ENCODE measurements at regions of chr18 and their contacts with region 1.

Region 1: GRCh38 chr18:50356036-50356945 is 18.6 kb upstream of the SKA1 start:
- DNase-seq: no peak
- H3K4me3 ChIP-seq: no peak overlapping the region
- H3K27ac ChIP-seq: no peak overlapping the region
- H3K4me1 ChIP-seq: peaks cover 0 to 4% (median 0%) of the 10 kb centered on the region in 4 experiments; a peak in 1 of 7 replicates
- H3K27me3 ChIP-seq: 0 out of 7 replicates have a peak, but pooled peaks cover 0 to 2% (median 0%) of the 10 kb centered on the region in 4 experiments
- CTCF ChIP-seq: peak in 2 of 3 experiments; percentile 33 to 39; a peak in 2 of 4 replicates
- EP300 ChIP-seq: no peak
- POLR2A ChIP-seq: no peak
- RAD21 ChIP-seq: peak in 1 of 2 experiments; percentile 10; a peak in 1 of 4 replicates

Region 2: DNA sequence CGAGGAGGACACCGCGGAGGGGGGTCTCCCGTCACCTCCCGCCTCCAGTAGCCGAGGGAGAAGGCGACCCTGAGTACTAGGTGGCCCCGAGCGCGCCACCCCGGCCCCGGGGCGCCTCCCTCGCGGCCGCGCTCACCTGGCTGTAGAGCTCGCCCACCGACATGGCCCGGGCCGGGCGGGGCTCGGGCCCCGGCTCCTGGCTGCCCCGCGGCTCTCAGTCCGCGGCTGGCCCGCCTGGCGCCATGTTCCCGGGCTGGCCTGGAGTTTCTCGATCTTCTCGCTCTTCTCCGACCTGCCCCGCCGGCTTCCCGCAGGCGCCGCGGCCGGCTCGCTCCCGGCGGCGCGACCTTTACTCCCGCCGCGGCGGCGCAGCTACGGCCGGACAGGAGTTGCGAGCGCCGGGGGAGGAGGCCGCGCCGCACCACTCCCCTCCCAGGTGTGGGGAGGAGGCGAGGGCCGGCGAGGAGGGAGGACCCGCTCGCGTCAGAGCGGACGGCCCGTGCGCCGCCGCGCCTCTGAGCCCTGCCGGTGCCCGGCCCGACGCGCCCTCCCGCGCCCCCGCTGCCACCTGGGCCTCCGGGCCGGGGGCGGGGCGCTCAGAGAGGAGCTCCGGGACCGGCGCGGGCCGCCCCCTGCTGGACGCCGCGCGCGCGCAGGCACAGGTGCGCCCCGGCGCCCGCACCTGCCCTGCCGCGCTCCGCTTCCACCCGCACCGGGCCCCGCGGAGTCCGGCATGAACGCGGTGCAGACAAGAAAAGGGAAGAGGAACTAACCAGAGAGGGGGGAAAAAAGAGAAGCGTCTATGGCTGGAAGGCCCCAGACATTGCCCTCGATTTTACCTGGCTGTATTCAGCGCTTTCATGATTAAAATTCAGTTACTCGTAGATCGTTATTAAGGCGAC is 161.4 kb before region 1 on chr18 and contains the start of gene MYO5B:
- CTCF ChIA-PET with region 1: interaction called, 11 read pairs
- POLR2A ChIA-PET with region 1: no interaction called
- DNase-seq: peak in 1 of 2 experiments; percentile 86
- H3K4me3 ChIP-seq: peak within 1 kb of the TSS; percentile 52 to 87 (median 54)
- H3K27ac ChIP-seq: no peak within 1 kb of the TSS
- H3K4me1 ChIP-seq: peaks cover 0 to 12% (median 9%) of the 10 kb centered on the region in 4 experiments; a peak in 5 of 7 replicates
- H3K27me3 ChIP-seq: peaks cover 23 to 51% (median 42%) of the 10 kb centered on the region in 4 experiments
- CTCF ChIP-seq: peak; percentile 65 to 80 (median 78)
- EP300 ChIP-seq: peak in 1 of 2 experiments; percentile 50; a peak in 1 of 3 replicates
- POLR2A ChIP-seq: peak in 1 of 2 experiments; percentile 24; a peak in 1 of 3 replicates
- RAD21 ChIP-seq: peak; percentile 34 to 75; a peak in 3 of 4 replicates
- total RNA-seq, gene MYO5B: 6.4 and 6.9 TPM in 2 replicates

Region 3: GRCh38 chr18:50218432-50219197 is 137.7 kb before region 1 on chr18:
- CTCF ChIA-PET with region 1: interaction called, 51 read pairs
- POLR2A ChIA-PET with region 1: no interaction called
- DNase-seq: peak in 1 of 2 experiments; percentile 60
- H3K4me3 ChIP-seq: no peak overlapping the region
- H3K27ac ChIP-seq: no peak overlapping the region
- H3K4me1 ChIP-seq: no peaks in the 10 kb centered on the region
- H3K27me3 ChIP-seq: no peaks in the 10 kb centered on the region
- CTCF ChIP-seq: peak; percentile 20 to 76 (median 69)
- EP300 ChIP-seq: no peak
- POLR2A ChIP-seq: no peak
- RAD21 ChIP-seq: peak; percentile 64 to 70

Region 4: DNA sequence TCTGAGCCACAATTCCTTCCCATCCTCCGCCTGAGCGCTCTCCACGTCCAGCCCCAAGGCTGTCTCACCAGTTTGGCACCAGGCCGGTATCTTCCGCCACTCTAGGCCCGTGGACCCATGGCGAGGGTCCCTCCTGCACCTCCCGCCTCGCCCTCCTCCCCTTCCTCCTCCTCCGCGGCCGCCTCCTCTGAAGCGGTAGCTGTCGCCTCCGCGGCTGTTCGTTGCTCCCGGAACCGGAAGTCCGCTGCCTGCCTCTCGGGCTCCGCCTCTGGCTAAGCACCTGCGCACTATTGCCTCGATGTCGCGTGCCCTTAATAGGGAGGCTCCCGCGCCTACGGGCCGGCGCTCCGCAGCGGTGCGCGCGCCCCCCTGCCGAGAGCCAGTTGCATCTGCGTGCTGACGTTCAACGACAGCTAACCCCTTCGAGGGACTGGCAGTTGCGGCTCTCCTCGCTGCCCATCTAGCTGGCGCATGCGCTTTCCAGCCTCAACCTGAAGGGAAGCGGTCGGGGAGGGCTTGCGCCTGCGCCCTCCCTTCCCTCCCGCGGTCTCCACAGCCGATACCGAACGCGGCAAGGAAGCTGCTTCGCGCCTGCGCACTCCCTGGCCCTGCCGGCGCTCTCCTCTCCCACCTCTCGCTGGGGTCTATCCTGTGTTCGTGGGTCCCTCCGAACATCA is 74.9 kb before region 1 on chr18 and contains the start of gene MBD1:
- CTCF ChIA-PET with region 1: interaction called, 16 read pairs
- POLR2A ChIA-PET with region 1: no interaction called
- DNase-seq: peak; percentile 92 to 93
- H3K4me3 ChIP-seq: peak within 1 kb of the TSS; percentile 93 to 97 (median 94)
- H3K27ac ChIP-seq: peak within 1 kb of the TSS; percentile 74
- H3K4me1 ChIP-seq: peaks cover 0 to 11% (median 4%) of the 10 kb centered on the region in 4 experiments; a peak in 5 of 7 replicates
- H3K27me3 ChIP-seq: no peaks in the 10 kb centered on the region
- CTCF ChIP-seq: peak in 2 of 3 experiments; percentile 6 to 10; a peak in 2 of 4 replicates
- EP300 ChIP-seq: no peak
- POLR2A ChIP-seq: no peak; a peak in 1 of 3 replicates
- RAD21 ChIP-seq: no peak
- total RNA-seq, gene MBD1: 39.5 and 41.6 TPM in 2 replicates

Region 5: DNA sequence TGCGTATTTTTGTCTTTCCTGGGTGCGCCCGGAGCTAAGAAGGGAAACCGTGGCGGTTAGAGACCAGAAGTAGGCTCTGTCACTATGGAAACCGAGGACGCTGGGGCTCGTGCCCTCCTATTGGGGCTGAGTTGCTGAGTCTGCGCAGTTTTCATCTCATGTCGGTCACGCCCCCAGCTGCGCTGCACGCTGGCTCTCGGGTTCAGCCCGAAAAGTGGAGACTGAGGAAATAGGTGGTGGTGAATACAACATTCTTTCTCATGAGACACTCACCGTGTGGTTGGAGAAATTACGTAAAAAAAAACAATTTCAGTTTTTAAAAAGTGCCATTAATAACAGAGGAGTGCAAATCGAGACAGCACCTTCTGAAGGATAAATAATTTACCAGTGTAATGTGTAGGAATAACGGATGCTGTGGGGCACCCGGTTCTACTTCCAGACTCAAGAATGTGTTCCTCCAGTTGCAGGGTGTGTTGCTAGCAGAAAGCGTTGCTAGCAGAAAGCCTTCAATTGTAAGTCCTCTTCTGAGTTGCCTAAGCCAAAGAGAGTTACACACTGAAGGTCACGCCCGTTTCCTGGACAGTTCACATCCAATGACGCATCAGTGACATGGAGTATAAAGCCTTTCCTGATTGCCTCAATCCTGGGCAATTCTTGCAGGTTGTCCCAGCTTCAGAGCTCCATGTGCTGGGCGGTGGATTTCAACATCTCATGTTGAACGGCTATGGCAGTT is 48.4 kb before region 1 on chr18:
- CTCF ChIA-PET with region 1: interaction called, 10 read pairs
- POLR2A ChIA-PET with region 1: no interaction called
- DNase-seq: peak; percentile 53 to 91
- H3K4me3 ChIP-seq: peak overlapping the region; percentile 48 to 73 (median 66)
- H3K27ac ChIP-seq: no peak overlapping the region
- H3K4me1 ChIP-seq: peaks cover 0 to 4% (median 0%) of the 10 kb centered on the region in 4 experiments; a peak in 2 of 7 replicates
- H3K27me3 ChIP-seq: peaks cover 0 to 8% (median 6%) of the 10 kb centered on the region in 4 experiments; a peak in 5 of 7 replicates
- CTCF ChIP-seq: no peak
- EP300 ChIP-seq: no peak
- POLR2A ChIP-seq: no peak
- RAD21 ChIP-seq: no peak

Region 6: GRCh38 chr18:50397023-50397422 is 40.7 kb after region 1 on chr18:
- CTCF ChIA-PET with region 1: interaction called, 20 read pairs
- POLR2A ChIA-PET with region 1: no interaction called
- DNase-seq: no peak
- H3K4me3 ChIP-seq: no peak overlapping the region
- H3K27ac ChIP-seq: no peak overlapping the region
- H3K4me1 ChIP-seq: peaks cover 5 to 26% (median 20%) of the 10 kb centered on the region in 4 experiments
- H3K27me3 ChIP-seq: peaks cover 2 to 14% (median 11%) of the 10 kb centered on the region in 4 experiments; a peak in 4 of 7 replicates
- CTCF ChIP-seq: no peak
- EP300 ChIP-seq: no peak
- POLR2A ChIP-seq: no peak
- RAD21 ChIP-seq: no peak

Region 7: DNA sequence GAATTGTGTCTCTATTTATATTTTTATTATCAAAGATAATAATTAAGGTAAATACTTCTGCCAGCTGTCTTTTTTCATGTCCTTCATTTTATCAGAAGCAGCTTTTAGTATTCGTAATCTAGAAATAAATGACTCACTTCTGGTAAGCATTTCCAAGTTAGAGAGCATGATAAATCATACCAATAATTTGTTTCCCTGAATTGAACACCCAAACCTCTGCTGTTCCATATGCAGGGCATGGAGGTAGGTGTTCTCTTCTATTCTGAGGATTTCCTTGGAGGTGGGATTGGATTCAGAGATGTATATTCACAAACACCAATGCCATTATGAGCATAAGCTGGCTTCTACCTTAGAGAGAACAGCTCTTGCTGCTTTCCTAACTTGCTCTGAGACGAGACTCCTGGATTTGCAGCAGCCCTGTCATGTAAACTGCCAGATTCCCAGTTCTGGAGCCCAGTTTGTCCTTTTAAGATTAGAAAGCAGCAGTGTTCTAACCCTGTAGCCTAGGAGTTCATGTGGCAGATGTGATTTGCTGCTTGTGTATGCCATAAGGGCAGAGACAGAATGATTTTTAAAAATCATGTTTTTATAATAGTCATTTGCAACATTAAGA is 66.1 kb after region 1 on chr18:
- CTCF ChIA-PET with region 1: interaction called, 14 read pairs
- POLR2A ChIA-PET with region 1: no interaction called
- DNase-seq: no peak
- H3K4me3 ChIP-seq: no peak overlapping the region
- H3K27ac ChIP-seq: no peak overlapping the region
- H3K4me1 ChIP-seq: no peaks in the 10 kb centered on the region
- H3K27me3 ChIP-seq: no peaks in the 10 kb centered on the region
- CTCF ChIP-seq: no peak
- EP300 ChIP-seq: no peak
- POLR2A ChIP-seq: no peak
- RAD21 ChIP-seq: no peak

Region 8: GRCh38 chr18:50559752-50560680 is 203.7 kb after region 1 on chr18 and contains the start of gene MAPK4:
- CTCF ChIA-PET with region 1: no interaction called
- POLR2A ChIA-PET with region 1: no interaction called
- DNase-seq: peak in 1 of 2 experiments; percentile 64
- H3K4me3 ChIP-seq: peak within 1 kb of the TSS; percentile 66 to 95 (median 69)
- H3K27ac ChIP-seq: no peak within 1 kb of the TSS
- H3K4me1 ChIP-seq: peaks cover 0 to 7% (median 4%) of the 10 kb centered on the region in 4 experiments; a peak in 4 of 7 replicates
- H3K27me3 ChIP-seq: peaks cover 5 to 43% (median 41%) of the 10 kb centered on the region in 4 experiments
- CTCF ChIP-seq: no peak
- EP300 ChIP-seq: no peak
- POLR2A ChIP-seq: no peak
- RAD21 ChIP-seq: no peak
- total RNA-seq, gene MAPK4: 2.1 and 3.2 TPM in 2 replicates

Measured in H1 (cell line).